ENCODE measurements at regions of chr12 and their contacts with region 1.

Region 1: DNA sequence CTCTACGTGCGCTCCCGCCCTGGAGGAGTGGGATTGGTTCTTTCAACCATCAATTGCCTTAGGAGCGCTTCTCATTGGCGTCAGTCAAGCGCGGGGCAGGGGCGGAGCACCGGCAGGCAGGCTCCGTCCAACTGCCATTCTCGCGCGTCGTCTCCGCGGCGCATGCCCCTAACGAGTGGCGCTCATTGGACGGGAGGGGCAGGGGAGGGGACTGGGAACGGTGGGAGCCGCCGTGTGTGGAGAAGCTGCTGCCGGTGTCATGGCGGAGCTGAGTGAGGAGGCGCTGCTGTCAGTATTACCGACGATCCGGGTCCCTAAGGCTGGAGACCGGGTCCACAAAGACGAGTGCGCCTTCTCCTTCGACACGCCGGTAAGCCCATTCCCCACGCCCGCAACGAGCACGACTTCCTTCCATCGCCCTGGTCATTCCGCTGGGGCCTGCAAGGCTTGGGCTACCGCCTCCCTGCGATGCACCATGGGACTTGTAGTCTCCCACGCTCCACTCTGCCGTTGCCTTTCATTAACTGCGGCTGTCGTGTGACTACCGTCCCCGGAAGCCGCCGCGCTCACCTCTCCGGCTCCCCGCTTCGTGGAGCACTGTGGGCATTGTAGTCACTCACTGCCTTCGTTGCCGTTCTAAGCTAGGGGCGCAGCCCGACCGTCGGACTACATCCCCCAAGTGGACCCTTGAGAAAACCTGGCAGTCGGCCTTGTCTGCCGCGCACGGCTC is at the start of gene USP5:
- DNase-seq: peak; percentile 99 to 100
- ATAC-seq: peak; percentile 88 to 91
- H3K4me3 ChIP-seq: peak within 1 kb of the TSS; percentile 50
- H3K27ac ChIP-seq: peak within 1 kb of the TSS; percentile 87 to 89
- H3K4me1 ChIP-seq: peaks cover 23% of the 10 kb centered on the region
- CTCF ChIP-seq: no peak
- EP300 ChIP-seq: no peak
- POLR2A ChIP-seq: peak; percentile 80
- RAD21 ChIP-seq: no peak
- polyA plus RNA-seq, gene USP5: 58.6 and 64.5 TPM in 2 replicates

Region 2: GRCh38 chr12:6688999-6689882 is 162.8 kb before region 1 on chr12 and contains the start of gene ZNF384:
- CTCF ChIA-PET with region 1: interaction called, 3 read pairs
- POLR2A ChIA-PET with region 1: interaction called, 17 read pairs
- DNase-seq: peak; percentile 100
- ATAC-seq: peak; percentile 91 to 92
- H3K4me3 ChIP-seq: peak within 1 kb of the TSS; percentile 94
- H3K27ac ChIP-seq: peak within 1 kb of the TSS; percentile 98 to 100
- H3K4me1 ChIP-seq: peaks cover 18% of the 10 kb centered on the region; the same call in 2 of the 3 replicates
- CTCF ChIP-seq: no peak
- EP300 ChIP-seq: no peak
- POLR2A ChIP-seq: peak; percentile 59
- RAD21 ChIP-seq: 0 out of 5 replicates have a peak, but pooled peaks of 1 of the 2 experiments have one; percentile 13
- polyA plus RNA-seq, gene ZNF384: 59.6 and 81.9 TPM in 2 replicates

Region 3: GRCh38 chr12:6764011-6764828 is 87.9 kb before region 1 on chr12:
- CTCF ChIA-PET with region 1: interaction called, 11 read pairs
- POLR2A ChIA-PET with region 1: interaction called, 18 read pairs
- DNase-seq: peak; percentile 100
- ATAC-seq: peak; percentile 69 to 87
- H3K4me3 ChIP-seq: peak overlapping the region; percentile 97
- H3K27ac ChIP-seq: peak overlapping the region; percentile 95 to 99
- H3K4me1 ChIP-seq: peaks cover 39% of the 10 kb centered on the region
- CTCF ChIP-seq: no peak
- EP300 ChIP-seq: no peak
- POLR2A ChIP-seq: peak; percentile 47
- RAD21 ChIP-seq: no peak

Region 4: DNA sequence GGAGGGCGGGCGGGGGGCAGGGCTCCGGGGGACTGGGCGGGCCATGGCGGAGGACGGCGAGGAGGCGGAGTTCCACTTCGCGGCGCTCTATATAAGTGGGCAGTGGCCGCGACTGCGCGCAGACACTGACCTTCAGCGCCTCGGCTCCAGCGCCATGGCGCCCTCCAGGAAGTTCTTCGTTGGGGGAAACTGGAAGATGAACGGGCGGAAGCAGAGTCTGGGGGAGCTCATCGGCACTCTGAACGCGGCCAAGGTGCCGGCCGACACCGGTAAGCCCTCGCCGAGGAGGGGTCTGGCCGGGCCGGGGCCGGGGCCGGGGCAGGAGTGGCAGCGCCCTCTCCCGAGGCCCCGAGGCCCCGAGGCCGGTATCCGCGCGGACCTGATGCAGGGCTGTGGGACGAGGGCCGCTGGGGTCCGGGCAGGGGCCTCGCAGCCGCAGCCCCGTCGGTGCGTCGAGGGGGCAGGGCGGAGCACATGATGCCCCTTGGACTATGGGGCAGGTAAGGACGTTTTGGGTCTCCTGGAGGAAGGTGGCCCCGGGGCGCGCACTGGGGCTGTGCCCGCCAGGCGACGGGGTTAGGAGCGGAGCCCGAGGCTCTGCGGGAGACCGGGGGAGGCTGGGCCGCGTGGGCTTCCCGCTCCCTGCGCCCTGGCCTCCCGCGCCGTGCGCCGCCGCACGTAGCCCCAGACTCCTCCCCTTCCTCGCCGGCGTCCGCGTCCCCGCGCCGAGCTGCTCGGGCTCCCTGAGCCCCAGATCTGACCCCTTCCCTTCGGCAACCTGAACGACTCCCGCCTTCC is 15.5 kb after region 1 on chr12 and contains the start of gene TPI1:
- CTCF ChIA-PET with region 1: interaction called, 69 read pairs
- POLR2A ChIA-PET with region 1: interaction called, 74 read pairs
- DNase-seq: peak; percentile 77 to 85
- ATAC-seq: peak; percentile 45 to 71
- H3K4me3 ChIP-seq: peak within 1 kb of the TSS; percentile 100
- H3K27ac ChIP-seq: peak within 1 kb of the TSS; percentile 97 to 99
- H3K4me1 ChIP-seq: peaks cover 42% of the 10 kb centered on the region
- CTCF ChIP-seq: no peak
- EP300 ChIP-seq: no peak
- POLR2A ChIP-seq: peak; percentile 99
- RAD21 ChIP-seq: no peak
- polyA plus RNA-seq, gene TPI1: 1,913 and 2,511 TPM in 2 replicates

Region 5: DNA sequence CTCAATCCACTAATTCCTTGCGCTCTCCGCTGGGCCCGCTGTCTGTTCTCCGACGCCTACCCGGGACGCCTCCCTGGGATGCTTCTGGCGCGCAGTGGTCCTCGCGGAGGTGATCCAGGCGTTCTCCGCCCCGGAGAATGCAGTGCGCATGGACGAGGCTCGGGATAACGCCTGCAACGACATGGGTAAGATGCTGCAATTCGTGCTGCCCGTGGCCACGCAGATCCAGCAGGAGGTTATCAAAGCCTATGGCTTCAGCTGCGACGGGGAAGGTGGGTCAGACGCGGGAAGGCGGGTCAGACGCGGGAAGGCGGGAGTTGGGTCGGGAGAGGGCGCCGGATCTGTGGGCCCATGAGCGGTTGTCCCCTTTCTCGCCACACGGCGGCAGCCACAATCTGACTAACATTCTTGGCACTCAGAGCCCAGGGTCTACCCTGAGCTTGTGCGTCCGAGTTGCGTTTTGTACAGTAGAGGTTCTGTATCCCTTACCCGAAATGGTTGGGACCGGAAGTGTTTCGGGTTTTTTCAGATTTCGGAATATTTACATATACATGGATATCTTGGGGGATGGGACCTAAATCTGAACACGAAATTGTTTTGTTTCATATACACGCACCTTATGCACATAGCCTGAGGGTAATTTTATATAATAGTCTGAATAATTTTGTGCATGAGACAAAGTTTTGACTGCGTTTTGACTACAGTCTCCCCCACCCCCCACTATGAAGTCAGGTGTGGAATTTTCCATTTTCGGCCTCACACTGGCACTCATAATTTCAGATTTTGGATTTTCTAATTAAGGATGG is 92.5 kb after region 1 on chr12:
- CTCF ChIA-PET with region 1: interaction called, 3 read pairs
- POLR2A ChIA-PET with region 1: interaction called, 23 read pairs
- DNase-seq: peak; percentile 93 to 97
- ATAC-seq: peak; percentile 52 to 73
- H3K4me3 ChIP-seq: peak overlapping the region; percentile 59
- H3K27ac ChIP-seq: peak overlapping the region; percentile 80 to 90
- H3K4me1 ChIP-seq: peaks cover 36% of the 10 kb centered on the region
- CTCF ChIP-seq: peak; percentile 85
- EP300 ChIP-seq: no peak
- POLR2A ChIP-seq: no peak; the same call in 1 of the 2 replicates
- RAD21 ChIP-seq: peak; percentile 87